ENCODE measurements at regions of chr9 and their contacts with region 1.

Region 1: GRCh38 chr9:32741706-32742105 is 41.6 kb upstream of the TMEM215 start:
- DNase-seq: no peak
- ATAC-seq: no peak
- H3K4me3 ChIP-seq: no peak overlapping the region
- H3K27ac ChIP-seq: no peak overlapping the region
- H3K4me1 ChIP-seq: no peaks in the 10 kb centered on the region
- H3K27me3 ChIP-seq: no peaks in the 10 kb centered on the region
- CTCF ChIP-seq: no peak
- POLR2A ChIP-seq: no peak
- RAD21 ChIP-seq: no peak

Region 2: DNA sequence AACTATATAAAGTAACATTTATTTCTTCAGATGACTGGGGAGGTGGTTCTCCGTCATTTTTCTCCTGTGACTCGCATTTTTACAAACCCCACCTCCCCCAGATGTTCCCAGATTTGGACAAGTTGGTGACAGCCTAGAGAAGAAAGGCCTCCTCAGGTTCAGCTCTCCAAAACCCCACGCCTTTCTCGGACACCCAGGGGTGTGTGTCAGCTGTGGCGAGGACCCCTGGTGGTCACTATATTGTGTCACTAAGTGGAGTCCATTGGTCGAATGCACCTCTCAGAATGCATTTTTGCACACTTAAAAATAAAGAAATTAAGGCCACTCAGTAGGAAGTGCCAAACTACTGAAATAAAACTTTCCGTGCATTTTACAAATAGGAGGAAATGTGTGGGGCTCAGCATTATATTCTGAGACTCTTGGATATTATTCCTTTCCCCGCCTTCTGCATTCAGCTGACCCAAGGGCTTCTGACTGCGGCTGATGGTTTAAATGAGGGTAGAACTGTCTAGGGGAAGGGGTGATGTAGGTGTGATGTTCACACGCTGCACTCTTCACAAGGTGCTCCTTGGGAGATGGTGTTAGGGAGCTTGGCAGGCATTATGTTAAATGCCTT is 309.7 kb before region 1 on chr9:
- CTCF ChIA-PET with region 1: no interaction called
- POLR2A ChIA-PET with region 1: no interaction called
- dilution Hi-C with region 1: no loop called
- in situ Hi-C with region 1: no loop called
- intact Hi-C with region 1: no loop called
- DNase-seq: peak; percentile 64
- ATAC-seq: peak; percentile 43
- H3K4me3 ChIP-seq: no peak overlapping the region
- H3K27ac ChIP-seq: peak overlapping the region; percentile 82
- H3K4me1 ChIP-seq: peaks cover 35% of the 10 kb centered on the region
- H3K27me3 ChIP-seq: no peaks in the 10 kb centered on the region
- CTCF ChIP-seq: peak; percentile 57
- POLR2A ChIP-seq: no peak
- RAD21 ChIP-seq: peak; percentile 55

Region 3: GRCh38 chr9:32490601-32491000 is 251.1 kb before region 1 on chr9:
- CTCF ChIA-PET with region 1: no interaction called
- POLR2A ChIA-PET with region 1: no interaction called
- dilution Hi-C with region 1: no loop called
- in situ Hi-C with region 1: no loop called
- intact Hi-C with region 1: no loop called
- DNase-seq: no peak
- ATAC-seq: no peak
- H3K4me3 ChIP-seq: no peak overlapping the region
- H3K27ac ChIP-seq: no peak overlapping the region
- H3K4me1 ChIP-seq: peaks cover 4% of the 10 kb centered on the region; the same call in 1 of the 2 replicates
- H3K27me3 ChIP-seq: no peaks in the 10 kb centered on the region
- CTCF ChIP-seq: no peak
- POLR2A ChIP-seq: no peak
- RAD21 ChIP-seq: no peak

Region 4: DNA sequence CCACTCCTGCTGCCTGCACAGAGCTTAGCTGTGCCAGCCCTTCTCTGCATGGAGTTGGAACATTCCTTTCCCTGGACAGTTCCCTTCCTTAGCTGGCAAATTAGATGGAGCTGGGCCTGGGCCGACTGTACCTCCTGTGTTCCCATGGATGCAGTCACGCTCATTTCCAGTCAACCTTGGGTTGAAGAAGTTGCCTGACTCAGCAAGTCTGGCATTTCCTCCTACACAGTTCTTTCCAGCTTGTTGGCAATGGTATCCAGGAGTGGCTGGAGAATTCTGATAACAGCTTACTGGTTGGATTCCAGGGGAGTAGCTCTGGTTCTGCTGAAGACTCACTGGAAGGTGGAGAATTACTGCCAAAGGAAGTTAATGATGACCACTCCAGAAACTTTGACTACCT is 97.0 kb before region 1 on chr9:
- CTCF ChIA-PET with region 1: no interaction called
- POLR2A ChIA-PET with region 1: no interaction called
- dilution Hi-C with region 1: no loop called
- in situ Hi-C with region 1: no loop called
- intact Hi-C with region 1: loop called (anchors 10 kb)
- DNase-seq: peak; percentile 78
- ATAC-seq: peak; percentile 73
- H3K4me3 ChIP-seq: no peak overlapping the region
- H3K27ac ChIP-seq: no peak overlapping the region
- H3K4me1 ChIP-seq: no peaks in the 10 kb centered on the region
- H3K27me3 ChIP-seq: no peaks in the 10 kb centered on the region
- CTCF ChIP-seq: no peak
- POLR2A ChIP-seq: no peak
- RAD21 ChIP-seq: no peak

Region 5: GRCh38 chr9:32783169-32783891 is 41.6 kb after region 1 on chr9 and contains the start of gene TMEM215:
- CTCF ChIA-PET with region 1: no interaction called
- POLR2A ChIA-PET with region 1: no interaction called
- dilution Hi-C with region 1: no loop called
- in situ Hi-C with region 1: no loop called
- intact Hi-C with region 1: no loop called
- DNase-seq: no peak
- ATAC-seq: no peak
- H3K4me3 ChIP-seq: no peak within 1 kb of the TSS
- H3K27ac ChIP-seq: no peak within 1 kb of the TSS
- H3K4me1 ChIP-seq: no peaks in the 10 kb centered on the region
- H3K27me3 ChIP-seq: peaks cover 31% of the 10 kb centered on the region
- CTCF ChIP-seq: no peak
- POLR2A ChIP-seq: no peak
- RAD21 ChIP-seq: no peak
- total RNA-seq, gene TMEM215: not detected in 2 replicates

Region 6: GRCh38 chr9:32877639-32878217 is 136.0 kb after region 1 on chr9:
- CTCF ChIA-PET with region 1: no interaction called
- POLR2A ChIA-PET with region 1: no interaction called
- dilution Hi-C with region 1: no loop called
- in situ Hi-C with region 1: no loop called
- intact Hi-C with region 1: no loop called
- DNase-seq: no peak
- ATAC-seq: no peak
- H3K4me3 ChIP-seq: no peak overlapping the region
- H3K27ac ChIP-seq: no peak overlapping the region
- H3K4me1 ChIP-seq: no peaks in the 10 kb centered on the region
- H3K27me3 ChIP-seq: no peaks in the 10 kb centered on the region
- CTCF ChIP-seq: no peak
- POLR2A ChIP-seq: no peak
- RAD21 ChIP-seq: no peak

Measured in IMR-90 (cell line).